ENCODE measurements at regions of chr11 and their contacts with region 1.

Region 1: GRCh38 chr11:86938900-86939880 is 16.0 kb downstream of the FZD4 start:
- DNase-seq: no peak
- H3K4me3 ChIP-seq: peak overlapping the region in 1 of 3 donors; percentile 4
- H3K27ac ChIP-seq: peak overlapping the region; percentile 89 to 94 (median 93)
- H3K4me1 ChIP-seq: peaks cover 31 to 47% of the 10 kb centered on the region in 2 donors
- H3K27me3 ChIP-seq: no peaks in the 10 kb centered on the region
- CTCF ChIP-seq: peak; percentile 42 to 78 (median 66)
- POLR2A ChIP-seq: no peak

Region 2: DNA sequence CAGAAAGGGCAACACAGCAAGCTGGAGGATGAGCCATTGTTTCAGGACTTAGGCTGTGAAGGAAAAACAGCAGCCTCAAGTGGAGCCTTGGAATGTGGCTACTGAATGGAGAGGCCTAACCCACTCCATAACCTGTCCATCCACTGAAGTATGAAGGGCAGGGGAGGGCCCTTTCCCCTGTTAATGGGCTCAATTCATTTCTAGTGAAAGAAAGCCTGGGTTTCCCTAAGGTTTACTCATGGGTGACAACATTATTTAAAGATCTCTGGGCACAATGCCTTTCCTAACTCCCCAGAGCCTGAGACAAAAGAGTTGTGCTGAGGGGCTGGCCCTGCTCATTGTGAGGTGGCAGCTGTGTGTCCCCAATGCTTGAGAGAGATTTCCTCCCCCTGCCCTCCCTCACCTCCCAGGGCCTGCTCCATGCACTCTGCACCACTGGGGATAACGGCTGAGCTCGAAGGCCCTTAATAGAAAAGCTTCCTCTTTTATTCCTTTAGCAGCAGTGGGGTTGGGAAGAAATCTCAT is 350.6 kb before region 1 on chr11:
- intact Hi-C with region 1: no loop called
- DNase-seq: peak; percentile 81 to 83
- H3K4me3 ChIP-seq: no peak overlapping the region
- H3K27ac ChIP-seq: peak overlapping the region; percentile 51 to 78 (median 69)
- H3K4me1 ChIP-seq: peaks cover 30 to 52% of the 10 kb centered on the region in 2 donors
- H3K27me3 ChIP-seq: no peaks in the 10 kb centered on the region
- CTCF ChIP-seq: peak in 1 of 6 experiments; percentile 27
- POLR2A ChIP-seq: no peak

Region 3: GRCh38 chr11:87203907-87204602 is 264.9 kb after region 1 on chr11:
- intact Hi-C with region 1: no loop called
- DNase-seq: no peak
- H3K4me3 ChIP-seq: no peak overlapping the region
- H3K27ac ChIP-seq: no peak overlapping the region
- H3K4me1 ChIP-seq: peaks cover 0 to 4% of the 10 kb centered on the region in 2 donors
- H3K27me3 ChIP-seq: no peaks in the 10 kb centered on the region
- CTCF ChIP-seq: no peak
- POLR2A ChIP-seq: no peak

Region 4: DNA sequence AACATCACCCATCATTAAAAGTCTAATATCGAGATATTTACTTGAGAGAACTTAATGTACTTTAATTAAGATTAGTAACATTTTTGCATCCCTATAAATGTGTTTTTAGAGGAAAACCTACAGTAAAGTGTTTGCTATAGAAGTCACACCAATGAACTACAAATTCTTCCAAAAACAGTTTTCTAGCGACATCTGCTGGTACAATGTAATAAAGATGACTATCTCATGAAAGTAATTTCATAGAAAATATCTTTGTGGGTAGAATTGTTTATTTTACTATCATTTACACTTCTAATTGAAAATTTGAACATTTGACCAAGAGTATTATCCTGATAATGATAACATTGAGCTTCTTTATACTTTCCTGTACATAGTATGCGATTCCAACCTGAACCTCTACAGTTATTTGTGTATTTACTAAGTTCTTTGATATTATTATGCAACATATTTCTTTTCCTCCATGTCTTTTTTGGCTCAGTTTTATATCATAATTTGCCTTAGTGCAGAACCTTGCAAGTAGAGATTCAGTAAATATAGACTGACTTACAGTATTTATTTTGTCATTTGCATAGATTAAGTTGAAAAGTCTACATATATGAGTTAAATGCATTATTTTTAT is 351.2 kb after region 1 on chr11:
- intact Hi-C with region 1: loop called (anchors 5 kb)
- DNase-seq: no peak
- H3K4me3 ChIP-seq: no peak overlapping the region
- H3K27ac ChIP-seq: no peak overlapping the region
- H3K4me1 ChIP-seq: no peaks in the 10 kb centered on the region
- H3K27me3 ChIP-seq: no peaks in the 10 kb centered on the region
- CTCF ChIP-seq: peak; percentile 22 to 81 (median 48)
- POLR2A ChIP-seq: no peak

Region 5: GRCh38 chr11:87421422-87421821 is 482.2 kb after region 1 on chr11:
- intact Hi-C with region 1: loop called (anchors 10 kb)
- DNase-seq: peak; percentile 5 to 15
- H3K4me3 ChIP-seq: no peak overlapping the region
- H3K27ac ChIP-seq: no peak overlapping the region
- H3K4me1 ChIP-seq: no peaks in the 10 kb centered on the region
- H3K27me3 ChIP-seq: no peaks in the 10 kb centered on the region
- CTCF ChIP-seq: peak; percentile 60 to 82 (median 74)
- POLR2A ChIP-seq: no peak